Lower leg skin (tissue), 4 donors: ENCODE measurements at regions of chr18 and their contacts with region 1.

Region 1: GRCh38 chr18:39062426-39062825 is 1496.8 kb upstream of the CELF4 start:
- DNase-seq: no peak
- H3K4me3 ChIP-seq: no peak overlapping the region
- CTCF ChIP-seq: no peak
- POLR2A ChIP-seq: no peak

Region 2: DNA sequence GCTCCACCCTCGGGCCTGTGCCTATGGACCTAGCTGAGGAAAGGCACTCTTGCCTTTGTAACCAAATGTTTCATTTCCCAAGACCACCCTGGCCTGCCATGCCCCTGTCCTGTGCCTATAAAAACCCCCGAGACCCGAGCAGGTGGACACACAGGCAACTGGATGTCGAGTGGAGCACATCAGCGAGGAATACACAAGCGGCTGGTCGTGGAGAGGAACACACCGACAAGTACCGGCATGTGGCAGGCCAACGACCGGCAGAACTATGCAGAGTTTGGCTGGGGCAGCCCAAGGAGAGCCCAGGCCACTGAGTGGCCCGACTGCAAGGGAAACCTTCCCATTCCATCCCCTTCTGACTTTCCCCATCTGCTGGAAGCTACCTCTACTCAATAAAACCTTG is 466.9 kb after region 1 on chr18:
- intact Hi-C with region 1: no loop called
- DNase-seq: no peak
- H3K4me3 ChIP-seq: no peak overlapping the region
- CTCF ChIP-seq: no peak
- POLR2A ChIP-seq: no peak

Region 3: GRCh38 chr18:40133253-40133652 is 1070.8 kb after region 1 on chr18:
- intact Hi-C with region 1: no loop called
- DNase-seq: no peak
- H3K4me3 ChIP-seq: no peak overlapping the region
- CTCF ChIP-seq: no peak
- POLR2A ChIP-seq: no peak

Region 4: DNA sequence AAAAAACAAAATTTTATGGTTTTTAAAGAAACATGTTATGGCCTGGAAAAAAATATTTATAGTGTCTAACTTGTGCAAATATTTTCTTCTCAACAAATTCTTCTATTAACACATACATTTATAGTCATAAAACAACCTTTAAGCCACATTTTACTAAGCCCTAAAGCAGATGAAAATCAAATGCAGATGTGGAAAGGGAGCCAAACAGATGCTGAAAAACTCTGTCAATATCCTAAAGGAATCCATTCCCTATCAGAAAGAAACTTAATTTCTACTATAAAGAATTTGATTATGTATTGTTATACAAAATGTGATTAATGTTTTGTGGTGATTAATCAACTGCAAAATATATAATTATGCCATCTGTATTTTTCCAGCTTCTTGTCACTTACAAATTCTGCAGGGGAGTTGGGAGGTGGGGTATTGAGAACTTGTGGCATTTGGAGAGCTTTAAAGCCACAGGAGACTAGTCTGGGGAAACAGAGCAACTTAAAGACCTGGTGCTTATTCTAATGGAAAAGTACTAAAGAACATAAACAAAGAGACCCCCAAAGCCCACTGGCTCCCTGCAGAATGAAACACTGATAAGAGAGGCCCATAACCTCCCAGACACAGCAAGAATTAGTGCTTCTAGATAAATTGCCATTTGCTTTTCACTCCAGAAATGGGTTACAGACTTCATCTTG is 1171.6 kb after region 1 on chr18:
- intact Hi-C with region 1: loop called (anchors 5 kb)
- DNase-seq: no peak
- H3K4me3 ChIP-seq: no peak overlapping the region
- CTCF ChIP-seq: no peak
- POLR2A ChIP-seq: no peak